ENCODE measurements at regions of chr2 and their contacts with region 1.

Region 1: GRCh38 chr2:58543432-58543831 is 302.3 kb upstream of the FANCL start:
- DNase-seq: no peak
- H3K4me3 ChIP-seq: no peak overlapping the region
- H3K27ac ChIP-seq: no peak overlapping the region
- H3K4me1 ChIP-seq: no peaks in the 10 kb centered on the region
- H3K27me3 ChIP-seq: no peaks in the 10 kb centered on the region
- CTCF ChIP-seq: no peak

Region 2: GRCh38 chr2:58130238-58130637 is 413.2 kb before region 1 on chr2:
- CTCF ChIA-PET with region 1: interaction called, 10 read pairs
- POLR2A ChIA-PET with region 1: no interaction called
- intact Hi-C with region 1: no loop called
- DNase-seq: no peak
- H3K4me3 ChIP-seq: no peak overlapping the region
- H3K27ac ChIP-seq: no peak overlapping the region
- H3K4me1 ChIP-seq: no peaks in the 10 kb centered on the region
- H3K27me3 ChIP-seq: no peaks in the 10 kb centered on the region
- CTCF ChIP-seq: no peak

Region 3: GRCh38 chr2:58289029-58289428 is 254.4 kb before region 1 on chr2:
- CTCF ChIA-PET with region 1: no interaction called
- POLR2A ChIA-PET with region 1: no interaction called
- intact Hi-C with region 1: no loop called
- DNase-seq: no peak
- H3K4me3 ChIP-seq: no peak overlapping the region
- H3K27ac ChIP-seq: no peak overlapping the region
- H3K4me1 ChIP-seq: peaks cover 6% of the 10 kb centered on the region; the same call in 1 of the 2 replicates
- H3K27me3 ChIP-seq: no peaks in the 10 kb centered on the region
- CTCF ChIP-seq: no peak

Region 4: GRCh38 chr2:58341047-58341446 is 202.4 kb before region 1 on chr2:
- CTCF ChIA-PET with region 1: no interaction called
- POLR2A ChIA-PET with region 1: no interaction called
- intact Hi-C with region 1: no loop called
- DNase-seq: no peak
- H3K4me3 ChIP-seq: no peak overlapping the region
- H3K27ac ChIP-seq: no peak overlapping the region
- H3K4me1 ChIP-seq: no peaks in the 10 kb centered on the region
- H3K27me3 ChIP-seq: no peaks in the 10 kb centered on the region
- CTCF ChIP-seq: no peak

Measured in PC-9 (cell line).